ENCODE measurements at regions of chr5 and their contacts with region 1.

Region 1: DNA sequence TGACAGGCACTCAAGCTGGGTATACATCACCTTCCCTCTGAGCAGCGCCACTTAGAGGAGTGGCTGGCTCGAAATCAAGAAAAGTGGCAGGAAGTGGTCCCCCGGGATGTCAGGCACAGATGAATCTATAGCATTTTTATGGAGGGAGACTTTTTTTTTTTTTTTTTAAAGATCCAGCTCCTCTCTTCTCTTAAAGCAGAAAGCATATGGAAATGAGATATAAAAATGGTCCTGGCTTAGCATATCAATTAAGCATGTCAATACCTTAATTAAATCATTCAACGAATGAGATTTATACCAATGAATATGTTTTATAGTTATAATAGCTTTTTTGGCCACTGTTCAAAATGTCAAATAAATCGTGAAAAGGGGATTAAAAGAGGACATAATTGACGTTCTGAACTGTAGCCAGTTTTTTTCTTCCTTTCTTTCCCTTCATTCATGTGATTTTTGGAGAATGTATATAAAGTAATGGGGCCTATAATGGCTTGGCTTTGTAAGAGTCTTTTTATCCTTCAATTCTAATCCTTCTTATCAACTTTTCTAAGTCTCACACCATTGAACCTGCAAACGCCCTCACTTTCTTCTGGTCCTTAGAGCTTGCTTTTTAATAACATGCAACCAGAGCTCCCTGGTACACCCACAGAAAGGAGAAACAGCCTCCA is 319.2 kb upstream of the PANK3 start:
- DNase-seq: no peak
- ATAC-seq: no peak
- H3K4me3 ChIP-seq: no peak overlapping the region
- H3K27ac ChIP-seq: no peak overlapping the region
- H3K4me1 ChIP-seq: no peaks in the 10 kb centered on the region
- H3K27me3 ChIP-seq: peaks cover 3% of the 10 kb centered on the region; the same call in 1 of the 2 replicates
- CTCF ChIP-seq: no peak

Region 2: DNA sequence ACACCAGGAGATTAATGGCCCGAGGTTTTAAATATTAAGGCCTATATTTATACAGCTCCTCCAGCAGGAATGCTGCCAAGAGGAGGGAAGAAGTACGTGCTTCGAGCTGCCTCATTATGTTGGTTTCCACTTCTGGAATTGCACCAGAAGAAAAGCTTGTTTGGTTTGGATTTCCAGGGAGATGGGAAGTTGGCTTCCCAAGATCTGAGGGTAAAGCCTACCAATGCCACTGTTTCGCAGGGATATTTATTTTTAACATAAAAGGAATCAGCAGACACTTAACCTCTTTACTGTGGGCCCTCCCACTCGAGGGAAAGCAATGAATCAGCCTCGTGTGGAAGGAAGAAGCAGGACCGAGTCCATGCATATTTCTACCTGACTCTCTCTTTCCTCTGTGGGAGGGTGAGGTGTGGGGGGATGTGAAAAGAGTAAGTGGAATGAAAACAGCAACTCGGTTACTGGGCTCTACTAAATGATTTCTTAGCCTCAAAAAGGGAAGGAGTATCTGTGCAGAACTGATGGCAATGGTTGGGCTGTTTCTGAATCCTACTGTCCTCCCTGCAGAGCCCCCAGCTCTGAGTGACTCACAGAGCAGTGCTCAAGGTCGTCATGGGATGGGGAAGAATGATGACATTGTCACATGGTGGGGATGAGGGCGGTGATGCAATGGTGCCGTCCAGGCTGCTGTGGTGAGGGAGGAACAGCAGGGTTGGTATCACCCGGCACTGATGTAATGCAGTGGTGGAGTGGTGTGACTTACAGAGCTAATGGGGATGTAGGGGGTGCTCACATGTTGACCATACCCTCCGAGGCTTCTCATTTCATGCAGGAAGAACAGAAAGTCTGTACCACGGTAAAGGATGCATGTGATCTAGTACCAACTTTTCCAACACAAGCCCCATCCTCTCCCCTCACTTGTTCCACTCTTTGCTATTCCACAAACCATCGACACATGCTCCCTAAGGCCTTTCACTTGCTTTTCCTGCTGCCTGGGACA is 104.2 kb before region 1 on chr5:
- CTCF ChIA-PET with region 1: interaction called, 10 read pairs
- POLR2A ChIA-PET with region 1: no interaction called
- in situ Hi-C with region 1: no loop called
- intact Hi-C with region 1: no loop called
- DNase-seq: no peak
- ATAC-seq: no peak
- H3K4me3 ChIP-seq: no peak overlapping the region
- H3K27ac ChIP-seq: no peak overlapping the region
- H3K4me1 ChIP-seq: no peaks in the 10 kb centered on the region
- H3K27me3 ChIP-seq: no peaks in the 10 kb centered on the region
- CTCF ChIP-seq: no peak